OCI-LY7 (cell line): ENCODE measurements at regions of chr3 and their contacts with region 1.

Region 1: GRCh38 chr3:120417272-120417911 is 33.4 kb downstream of the FSTL1 start:
- DNase-seq: peak; percentile 94
- H3K4me3 ChIP-seq: peak overlapping the region; percentile 64
- H3K27ac ChIP-seq: peak overlapping the region; percentile 9
- H3K4me1 ChIP-seq: peaks cover 11% of the 10 kb centered on the region
- CTCF ChIP-seq: peak; percentile 94

Region 2: GRCh38 chr3:119819806-119820205 is 597.6 kb before region 1 on chr3:
- CTCF ChIA-PET with region 1: interaction called, 3 read pairs
- POLR2A ChIA-PET with region 1: no interaction called
- intact Hi-C with region 1: loop called (anchors 5 kb)
- DNase-seq: no peak
- H3K4me3 ChIP-seq: no peak overlapping the region
- H3K27ac ChIP-seq: no peak overlapping the region
- H3K4me1 ChIP-seq: no peaks in the 10 kb centered on the region
- CTCF ChIP-seq: no peak

Region 3: GRCh38 chr3:119891944-119892721 is 525.3 kb before region 1 on chr3:
- CTCF ChIA-PET with region 1: no interaction called
- POLR2A ChIA-PET with region 1: no interaction called
- intact Hi-C with region 1: loop called (anchors 10 kb)
- DNase-seq: peak; percentile 48
- H3K4me3 ChIP-seq: no peak overlapping the region
- H3K27ac ChIP-seq: no peak overlapping the region
- H3K4me1 ChIP-seq: no peaks in the 10 kb centered on the region
- CTCF ChIP-seq: peak; percentile 88

Region 4: GRCh38 chr3:120245386-120245785 is 172.0 kb before region 1 on chr3:
- CTCF ChIA-PET with region 1: interaction called, 7 read pairs
- POLR2A ChIA-PET with region 1: interaction called, 8 read pairs
- intact Hi-C with region 1: loop called (anchors 1 kb)
- DNase-seq: no peak
- H3K4me3 ChIP-seq: no peak overlapping the region
- H3K27ac ChIP-seq: no peak overlapping the region
- H3K4me1 ChIP-seq: no peaks in the 10 kb centered on the region
- CTCF ChIP-seq: no peak

Region 5: GRCh38 chr3:120348981-120349818 is 68.2 kb before region 1 on chr3 and contains the start of gene LRRC58:
- CTCF ChIA-PET with region 1: interaction called, 3 read pairs
- POLR2A ChIA-PET with region 1: interaction called, 18 read pairs
- intact Hi-C with region 1: loop called (anchors 2 kb)
- DNase-seq: peak; percentile 94
- H3K4me3 ChIP-seq: peak within 1 kb of the TSS; percentile 88
- H3K27ac ChIP-seq: peak within 1 kb of the TSS; percentile 69
- H3K4me1 ChIP-seq: peaks cover 26% of the 10 kb centered on the region
- CTCF ChIP-seq: peak; percentile 64
- total RNA-seq, gene LRRC58: 21.5 and 24.1 TPM in 2 replicates

Region 6: GRCh38 chr3:120506828-120507774 is 89.7 kb after region 1 on chr3:
- CTCF ChIA-PET with region 1: no interaction called
- POLR2A ChIA-PET with region 1: no interaction called
- intact Hi-C with region 1: loop called (anchors 5 kb)
- DNase-seq: peak; percentile 17
- H3K4me3 ChIP-seq: no peak overlapping the region
- H3K27ac ChIP-seq: no peak overlapping the region
- H3K4me1 ChIP-seq: no peaks in the 10 kb centered on the region
- CTCF ChIP-seq: peak; percentile 77

Region 7: DNA sequence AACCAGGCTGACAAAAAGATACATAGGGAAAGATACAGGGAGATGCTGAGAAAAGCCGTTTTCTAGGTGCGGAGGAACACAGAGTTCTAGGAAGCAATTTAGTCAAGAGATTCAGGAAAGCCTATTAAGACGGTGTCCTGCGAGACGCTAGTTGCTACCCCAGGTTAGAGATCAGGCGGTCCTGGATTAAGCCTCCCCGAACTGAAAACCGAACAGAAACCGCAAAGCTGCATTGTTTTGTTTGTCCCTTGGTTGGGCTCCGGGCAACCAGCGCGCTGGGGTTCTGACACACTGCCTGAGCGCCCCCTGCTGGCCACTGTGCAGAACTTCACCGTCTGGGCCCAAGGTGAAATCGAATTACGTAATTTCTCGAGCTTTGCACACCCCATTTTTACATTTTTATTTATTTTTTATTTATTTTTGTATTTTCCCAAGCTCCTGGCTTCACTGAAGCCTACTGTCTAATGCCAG is 141.4 kb after region 1 on chr3:
- CTCF ChIA-PET with region 1: interaction called, 19 read pairs
- POLR2A ChIA-PET with region 1: interaction called, 4 read pairs
- intact Hi-C with region 1: loop called (anchors 1 kb)
- DNase-seq: peak; percentile 84
- H3K4me3 ChIP-seq: peak overlapping the region; percentile 64
- H3K27ac ChIP-seq: no peak overlapping the region
- H3K4me1 ChIP-seq: peaks cover 3% of the 10 kb centered on the region
- CTCF ChIP-seq: peak; percentile 94